ENCODE measurements at regions of chr14 and their contacts with region 1.

Region 1: DNA sequence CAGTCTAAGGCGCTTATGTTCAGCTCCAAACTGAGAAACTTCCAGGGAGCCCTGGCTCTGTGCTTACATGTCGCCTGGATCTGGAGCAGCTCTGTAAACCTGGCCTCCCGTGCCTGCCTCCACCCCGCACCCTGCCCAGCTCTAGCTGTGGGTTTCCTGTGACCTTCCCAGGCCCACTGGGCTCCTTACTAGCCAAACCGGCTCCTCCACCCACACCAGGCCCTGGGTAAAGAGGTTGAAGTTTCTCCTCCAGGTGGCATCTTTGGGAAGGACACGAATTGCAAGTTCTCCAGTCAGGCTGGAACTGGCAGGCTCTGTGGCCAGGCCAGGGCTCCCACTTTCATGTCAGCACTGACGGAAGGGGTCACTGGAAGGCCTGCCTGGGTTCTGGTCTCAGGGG is 60.9 kb upstream of the ZFP36L1 start:
- DNase-seq: no peak
- ATAC-seq: no peak
- H3K4me3 ChIP-seq: no peak overlapping the region
- H3K27ac ChIP-seq: peak overlapping the region in 1 of 12 donors; percentile 5
- H3K4me1 ChIP-seq: peaks cover 0 to 7% (median 0%) of the 10 kb centered on the region in 12 donors
- H3K27me3 ChIP-seq: no peaks in the 10 kb centered on the region
- CTCF ChIP-seq: no peak
- POLR2A ChIP-seq: no peak

Region 2: GRCh38 chr14:68506021-68506644 is 347.6 kb before region 1 on chr14:
- intact Hi-C with region 1: no loop called
- DNase-seq: peak in 2 of 5 donors; percentile 28 to 55
- ATAC-seq: peak in 2 of 4 donors; percentile 18 to 50
- H3K4me3 ChIP-seq: no peak overlapping the region
- H3K27ac ChIP-seq: peak overlapping the region in 9 of 12 donors; percentile 4 to 62 (median 29)
- H3K4me1 ChIP-seq: peaks cover 0 to 44% (median 31%) of the 10 kb centered on the region in 12 donors
- H3K27me3 ChIP-seq: no peaks in the 10 kb centered on the region
- CTCF ChIP-seq: no peak
- POLR2A ChIP-seq: no peak

Region 3: GRCh38 chr14:68884031-68885030 is 30.6 kb after region 1 on chr14:
- intact Hi-C with region 1: no loop called
- DNase-seq: peak in 4 of 5 donors; percentile 59 to 85 (median 71)
- ATAC-seq: peak; percentile 78 to 87 (median 84)
- H3K4me3 ChIP-seq: no peak overlapping the region
- H3K27ac ChIP-seq: peak overlapping the region in 9 of 12 donors; percentile 24 to 83 (median 55)
- H3K4me1 ChIP-seq: peaks cover 0 to 22% (median 6%) of the 10 kb centered on the region in 12 donors
- H3K27me3 ChIP-seq: no peaks in the 10 kb centered on the region
- CTCF ChIP-seq: no peak
- POLR2A ChIP-seq: no peak

Region 4: DNA sequence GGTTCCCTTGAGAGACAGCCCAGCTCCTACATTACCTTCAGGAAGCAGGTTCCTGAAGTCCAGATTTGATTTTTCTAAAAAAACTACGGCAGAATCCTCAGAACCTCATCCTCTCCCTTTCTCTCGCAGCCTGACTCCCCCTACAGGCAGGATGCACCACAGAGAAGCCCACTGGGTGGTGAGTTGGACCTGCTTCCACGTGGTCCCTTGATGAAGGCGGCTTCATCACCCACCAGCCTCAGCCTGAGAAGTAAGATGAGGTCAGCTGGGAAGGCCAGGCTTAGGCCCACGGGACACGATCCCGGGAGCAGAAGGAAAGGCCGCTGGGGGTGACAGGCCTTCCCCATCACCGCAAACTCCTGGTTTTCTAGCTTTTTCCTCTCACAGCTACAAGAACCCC is 42.4 kb after region 1 on chr14:
- intact Hi-C with region 1: loop called in 1 of 10 experiments (anchors 2 kb)
- DNase-seq: no peak
- ATAC-seq: no peak
- H3K4me3 ChIP-seq: no peak overlapping the region
- H3K27ac ChIP-seq: peak overlapping the region in 1 of 12 donors; percentile 83
- H3K4me1 ChIP-seq: peaks cover 0 to 21% (median 8%) of the 10 kb centered on the region in 12 donors
- H3K27me3 ChIP-seq: no peaks in the 10 kb centered on the region
- CTCF ChIP-seq: peak in 3 of 12 donors; percentile 18 to 31 (median 23)
- POLR2A ChIP-seq: no peak